Caco-2 (cell line): ENCODE measurements at regions of chr4 and their contacts with region 1.

Region 1: GRCh38 chr4:56129431-56129861 is 180.7 kb downstream of the CEP135 start:
- DNase-seq: peak; percentile 72 to 75
- H3K4me3 ChIP-seq: no peak overlapping the region
- H3K4me3 Mint-ChIP-seq: no peak overlapping the region
- H3K27ac Mint-ChIP-seq: peak overlapping the region; percentile 6
- H3K4me1 ChIP-seq: peaks cover 23% of the 10 kb centered on the region
- H3K4me1 Mint-ChIP-seq: peaks cover 24% of the 10 kb centered on the region
- H3K27me3 ChIP-seq: no peaks in the 10 kb centered on the region
- H3K27me3 Mint-ChIP-seq: no peaks in the 10 kb centered on the region
- CTCF ChIP-seq: peak; percentile 51 to 88

Region 2: GRCh38 chr4:56164907-56165306 is 35.5 kb after region 1 on chr4:
- CTCF ChIA-PET with region 1: no interaction called
- POLR2A ChIA-PET with region 1: no interaction called
- intact Hi-C with region 1: no loop called
- DNase-seq: no peak
- H3K4me3 ChIP-seq: no peak overlapping the region
- H3K4me3 Mint-ChIP-seq: no peak overlapping the region
- H3K27ac Mint-ChIP-seq: no peak overlapping the region
- H3K4me1 ChIP-seq: no peaks in the 10 kb centered on the region
- H3K4me1 Mint-ChIP-seq: no peaks in the 10 kb centered on the region
- H3K27me3 ChIP-seq: no peaks in the 10 kb centered on the region
- H3K27me3 Mint-ChIP-seq: no peaks in the 10 kb centered on the region
- CTCF ChIP-seq: no peak

Region 3: DNA sequence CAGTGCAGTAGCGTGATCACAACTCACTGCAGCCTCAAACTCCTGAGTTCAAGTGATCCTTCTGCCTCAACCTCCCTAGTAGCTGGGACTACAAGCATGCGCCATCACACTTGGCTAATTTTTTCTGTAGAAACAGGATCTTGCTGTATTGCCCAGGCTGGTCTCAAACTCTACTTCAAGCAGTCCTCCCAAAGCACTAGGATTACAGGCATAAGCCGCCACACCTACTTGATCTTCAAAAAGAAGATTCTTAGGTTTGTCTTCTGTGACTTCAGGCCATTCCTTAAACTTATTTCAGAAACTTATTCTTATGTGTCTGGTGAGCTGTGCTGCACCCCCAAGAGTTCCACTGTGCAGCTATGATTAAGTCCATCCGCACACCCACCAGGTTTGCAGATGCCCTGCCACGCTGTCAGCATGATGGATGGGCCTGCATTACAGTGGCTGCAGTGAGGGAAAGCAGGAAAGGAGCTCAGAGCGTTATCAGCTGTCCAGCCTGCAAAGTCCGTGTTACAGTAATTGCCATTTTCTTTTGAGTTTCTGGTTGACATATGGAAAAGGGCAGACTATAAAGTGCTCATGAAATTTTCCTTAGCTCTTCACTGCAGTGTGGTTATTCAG is 111.2 kb after region 1 on chr4:
- CTCF ChIA-PET with region 1: no interaction called
- POLR2A ChIA-PET with region 1: no interaction called
- intact Hi-C with region 1: loop called (anchors 2 kb)
- DNase-seq: peak; percentile 54 to 83
- H3K4me3 ChIP-seq: peak overlapping the region; percentile 12; the same call in 1 of the 2 replicates
- H3K4me3 Mint-ChIP-seq: peak overlapping the region; percentile 64
- H3K27ac Mint-ChIP-seq: peak overlapping the region; percentile 88
- H3K4me1 ChIP-seq: peaks cover 83% of the 10 kb centered on the region
- H3K4me1 Mint-ChIP-seq: peaks cover 68% of the 10 kb centered on the region
- H3K27me3 ChIP-seq: no peaks in the 10 kb centered on the region
- H3K27me3 Mint-ChIP-seq: no peaks in the 10 kb centered on the region
- CTCF ChIP-seq: no peak

Region 4: DNA sequence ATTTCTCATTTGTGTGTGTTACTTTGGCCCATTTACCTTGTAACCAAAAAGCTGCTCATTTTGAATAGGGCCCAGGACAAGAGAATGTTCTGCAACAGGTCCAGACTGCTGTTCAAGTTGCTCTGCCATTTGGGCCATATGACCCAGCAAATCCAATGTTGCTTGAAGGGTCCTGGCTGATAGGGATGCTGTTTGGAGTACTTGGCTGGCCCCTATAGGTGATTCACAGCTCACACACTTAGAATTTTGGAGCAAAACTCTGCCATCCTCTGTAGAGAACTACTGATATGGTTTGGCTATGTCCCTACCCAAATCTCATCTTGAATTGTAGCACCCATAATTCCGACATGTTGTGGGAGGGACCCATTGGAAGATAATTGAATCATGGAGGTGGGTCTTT is 126.4 kb after region 1 on chr4:
- CTCF ChIA-PET with region 1: interaction called, 3 read pairs
- POLR2A ChIA-PET with region 1: no interaction called
- intact Hi-C with region 1: loop called (anchors 5 kb)
- DNase-seq: no peak
- H3K4me3 ChIP-seq: no peak overlapping the region
- H3K4me3 Mint-ChIP-seq: no peak overlapping the region
- H3K27ac Mint-ChIP-seq: peak overlapping the region; percentile 54
- H3K4me1 ChIP-seq: peaks cover 46% of the 10 kb centered on the region
- H3K4me1 Mint-ChIP-seq: peaks cover 33% of the 10 kb centered on the region
- H3K27me3 ChIP-seq: no peaks in the 10 kb centered on the region
- H3K27me3 Mint-ChIP-seq: no peaks in the 10 kb centered on the region
- CTCF ChIP-seq: no peak

Region 5: DNA sequence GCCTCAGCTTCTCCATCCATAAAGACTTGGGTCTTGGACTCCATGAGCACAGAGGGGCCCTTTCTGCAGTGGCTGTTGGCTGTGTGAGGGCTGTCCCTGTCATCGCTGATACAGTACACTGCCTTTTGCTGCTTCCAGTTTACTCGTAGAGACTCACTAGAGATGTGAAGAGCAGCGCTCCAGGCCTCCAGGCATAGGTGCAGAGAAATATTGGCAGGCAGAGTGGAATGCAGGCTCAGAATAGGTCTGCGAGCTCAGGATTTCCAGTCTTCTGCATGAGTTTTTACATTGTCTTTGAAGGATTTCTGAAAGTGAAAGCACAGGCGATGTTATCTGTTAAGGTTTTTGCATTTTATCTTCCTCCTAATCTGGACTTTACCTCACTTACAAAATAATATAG is 160.5 kb after region 1 on chr4:
- CTCF ChIA-PET with region 1: interaction called, 10 read pairs
- POLR2A ChIA-PET with region 1: no interaction called
- intact Hi-C with region 1: no loop called
- DNase-seq: peak; percentile 17 to 47
- H3K4me3 ChIP-seq: no peak overlapping the region
- H3K4me3 Mint-ChIP-seq: peak overlapping the region; percentile 37
- H3K27ac Mint-ChIP-seq: peak overlapping the region; percentile 74
- H3K4me1 ChIP-seq: peaks cover 33% of the 10 kb centered on the region; the same call in 1 of the 2 replicates
- H3K4me1 Mint-ChIP-seq: peaks cover 24% of the 10 kb centered on the region
- H3K27me3 ChIP-seq: no peaks in the 10 kb centered on the region
- H3K27me3 Mint-ChIP-seq: no peaks in the 10 kb centered on the region
- CTCF ChIP-seq: no peak